Activated B cell treated with CpG ODN at 0.5 μM for 24 hours (primary cell): ENCODE measurements at regions of chr6 and their contacts with region 1.

Region 1: DNA sequence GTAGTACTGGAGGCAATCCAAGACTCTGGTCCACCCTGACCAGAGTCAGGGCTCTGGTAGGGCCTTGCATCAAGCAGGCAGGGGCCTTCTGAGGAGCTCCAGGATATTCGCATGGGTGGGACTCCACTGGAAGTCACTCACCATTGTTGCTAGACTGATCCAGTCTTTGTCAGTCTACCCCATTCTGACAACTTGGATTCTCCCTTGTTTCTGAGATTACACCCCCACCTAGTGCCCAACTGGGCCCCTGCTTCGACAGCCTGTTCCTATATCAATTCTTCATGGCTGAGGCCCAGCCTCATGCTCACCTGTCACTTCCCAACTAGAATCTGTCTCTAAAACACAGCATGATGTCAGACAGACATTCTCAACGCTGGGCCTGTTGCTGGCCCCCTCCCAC is 5.2 kb downstream of the SLC35D3 start:
- DNase-seq: no peak
- ATAC-seq: no peak
- H3K4me3 Mint-ChIP-seq: no peak overlapping the region
- H3K27ac Mint-ChIP-seq: no peak overlapping the region
- H3K4me1 Mint-ChIP-seq: peaks cover 15% of the 10 kb centered on the region
- H3K27me3 Mint-ChIP-seq: peaks cover 21% of the 10 kb centered on the region
- CTCF ChIP-seq: no peak

Region 2: GRCh38 chr6:135506270-135506997 is 1420.9 kb before region 1 on chr6:
- CTCF ChIA-PET with region 1: no interaction called
- POLR2A ChIA-PET with region 1: no interaction called
- intact Hi-C with region 1: loop called (anchors 10 kb)
- DNase-seq: no peak
- ATAC-seq: peak; percentile 62
- H3K4me3 Mint-ChIP-seq: no peak overlapping the region
- H3K27ac Mint-ChIP-seq: no peak overlapping the region
- H3K4me1 Mint-ChIP-seq: peaks cover 2% of the 10 kb centered on the region
- H3K27me3 Mint-ChIP-seq: no peaks in the 10 kb centered on the region
- CTCF ChIP-seq: peak; percentile 35

Region 3: GRCh38 chr6:136582711-136583471 is 344.4 kb before region 1 on chr6:
- CTCF ChIA-PET with region 1: no interaction called
- POLR2A ChIA-PET with region 1: no interaction called
- intact Hi-C with region 1: loop called (anchors 1 kb)
- DNase-seq: no peak
- ATAC-seq: peak; percentile 28
- H3K4me3 Mint-ChIP-seq: no peak overlapping the region
- H3K27ac Mint-ChIP-seq: no peak overlapping the region
- H3K4me1 Mint-ChIP-seq: peaks cover 5% of the 10 kb centered on the region
- H3K27me3 Mint-ChIP-seq: no peaks in the 10 kb centered on the region
- CTCF ChIP-seq: no peak

Region 4: DNA sequence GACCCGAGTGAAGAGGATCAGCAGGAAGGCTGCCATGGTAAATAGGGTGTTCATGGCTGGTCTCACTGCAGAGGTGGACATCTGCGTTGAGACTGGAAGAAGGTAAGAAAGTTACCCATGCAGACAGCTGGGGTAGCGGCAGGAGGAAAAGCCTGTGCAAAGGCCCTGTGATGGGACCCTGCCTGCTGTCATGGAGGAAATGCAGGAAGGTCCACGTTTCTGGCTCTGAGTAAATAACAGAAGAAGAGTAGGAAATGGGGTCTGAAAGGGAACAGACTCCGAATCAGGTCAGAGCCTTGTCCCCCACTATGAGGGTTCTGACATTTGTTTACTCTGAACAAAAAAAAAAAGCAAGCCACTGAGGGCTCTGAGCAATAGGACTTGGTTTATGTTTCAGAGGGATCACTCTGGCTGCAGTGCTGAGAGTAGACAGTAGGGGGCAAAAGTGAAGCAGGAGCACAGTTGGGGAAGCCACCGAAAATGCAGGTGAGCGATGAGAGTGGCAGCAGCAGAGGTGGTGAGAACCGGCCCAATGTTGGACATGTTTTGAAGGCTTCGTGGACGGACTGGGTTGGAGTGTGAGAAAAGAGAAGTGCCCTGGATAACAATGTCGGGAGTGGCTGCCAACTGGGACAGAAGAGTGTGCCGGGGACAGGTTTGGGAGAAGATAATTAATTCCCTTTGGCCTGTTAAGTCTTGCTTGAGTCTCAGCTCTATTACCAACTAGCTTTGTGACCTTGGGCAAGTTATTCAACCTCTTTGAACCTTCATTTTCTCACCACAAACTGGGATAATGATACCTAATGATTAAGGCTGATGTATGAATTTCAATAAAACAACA is 319.1 kb before region 1 on chr6:
- CTCF ChIA-PET with region 1: no interaction called
- POLR2A ChIA-PET with region 1: no interaction called
- intact Hi-C with region 1: loop called (anchors 1 kb)
- DNase-seq: peak; percentile 53
- ATAC-seq: peak; percentile 99
- H3K4me3 Mint-ChIP-seq: no peak overlapping the region
- H3K27ac Mint-ChIP-seq: no peak overlapping the region
- H3K4me1 Mint-ChIP-seq: peaks cover 3% of the 10 kb centered on the region
- H3K27me3 Mint-ChIP-seq: no peaks in the 10 kb centered on the region
- CTCF ChIP-seq: peak; percentile 63

Region 5: DNA sequence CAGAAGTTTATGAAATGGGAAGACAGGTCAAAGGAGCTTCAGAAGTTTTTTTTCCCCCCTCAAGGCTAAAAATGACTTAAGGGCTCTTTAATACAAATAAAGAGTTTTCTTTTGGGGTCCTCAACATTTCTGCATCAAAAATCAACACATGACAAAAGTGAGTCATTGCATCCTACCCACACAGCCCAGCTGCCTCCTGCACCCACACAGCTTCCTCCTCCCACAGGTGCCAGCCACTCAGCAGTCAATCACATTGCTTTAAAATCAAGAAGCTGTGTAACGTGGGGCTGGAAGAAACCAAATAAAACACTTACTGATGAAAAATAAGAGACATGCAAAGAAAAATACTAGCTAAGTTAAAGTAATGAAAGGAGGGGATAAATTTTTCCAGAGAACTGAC is 203.5 kb before region 1 on chr6:
- CTCF ChIA-PET with region 1: no interaction called
- POLR2A ChIA-PET with region 1: no interaction called
- intact Hi-C with region 1: loop called (anchors 10 kb)
- DNase-seq: peak; percentile 25
- ATAC-seq: peak; percentile 89
- H3K4me3 Mint-ChIP-seq: peak overlapping the region; percentile 21
- H3K27ac Mint-ChIP-seq: peak overlapping the region; percentile 59
- H3K4me1 Mint-ChIP-seq: peaks cover 54% of the 10 kb centered on the region
- H3K27me3 Mint-ChIP-seq: no peaks in the 10 kb centered on the region
- CTCF ChIP-seq: no peak

Region 6: GRCh38 chr6:137240168-137240567 is 312.9 kb after region 1 on chr6:
- CTCF ChIA-PET with region 1: no interaction called
- POLR2A ChIA-PET with region 1: no interaction called
- intact Hi-C with region 1: no loop called
- DNase-seq: no peak
- ATAC-seq: no peak
- H3K4me3 Mint-ChIP-seq: no peak overlapping the region
- H3K27ac Mint-ChIP-seq: no peak overlapping the region
- H3K4me1 Mint-ChIP-seq: peaks cover 22% of the 10 kb centered on the region
- H3K27me3 Mint-ChIP-seq: no peaks in the 10 kb centered on the region
- CTCF ChIP-seq: no peak